PC-9 (cell line): ENCODE measurements at regions of chr2 and their contacts with region 1.

Region 1: GRCh38 chr2:129717560-129718130 is 261.8 kb upstream of the RAB6C start:
- DNase-seq: no peak
- H3K4me3 ChIP-seq: no peak overlapping the region
- H3K27ac ChIP-seq: no peak overlapping the region
- H3K4me1 ChIP-seq: no peaks in the 10 kb centered on the region
- H3K27me3 ChIP-seq: peaks cover 74% of the 10 kb centered on the region
- CTCF ChIP-seq: no peak

Region 2: DNA sequence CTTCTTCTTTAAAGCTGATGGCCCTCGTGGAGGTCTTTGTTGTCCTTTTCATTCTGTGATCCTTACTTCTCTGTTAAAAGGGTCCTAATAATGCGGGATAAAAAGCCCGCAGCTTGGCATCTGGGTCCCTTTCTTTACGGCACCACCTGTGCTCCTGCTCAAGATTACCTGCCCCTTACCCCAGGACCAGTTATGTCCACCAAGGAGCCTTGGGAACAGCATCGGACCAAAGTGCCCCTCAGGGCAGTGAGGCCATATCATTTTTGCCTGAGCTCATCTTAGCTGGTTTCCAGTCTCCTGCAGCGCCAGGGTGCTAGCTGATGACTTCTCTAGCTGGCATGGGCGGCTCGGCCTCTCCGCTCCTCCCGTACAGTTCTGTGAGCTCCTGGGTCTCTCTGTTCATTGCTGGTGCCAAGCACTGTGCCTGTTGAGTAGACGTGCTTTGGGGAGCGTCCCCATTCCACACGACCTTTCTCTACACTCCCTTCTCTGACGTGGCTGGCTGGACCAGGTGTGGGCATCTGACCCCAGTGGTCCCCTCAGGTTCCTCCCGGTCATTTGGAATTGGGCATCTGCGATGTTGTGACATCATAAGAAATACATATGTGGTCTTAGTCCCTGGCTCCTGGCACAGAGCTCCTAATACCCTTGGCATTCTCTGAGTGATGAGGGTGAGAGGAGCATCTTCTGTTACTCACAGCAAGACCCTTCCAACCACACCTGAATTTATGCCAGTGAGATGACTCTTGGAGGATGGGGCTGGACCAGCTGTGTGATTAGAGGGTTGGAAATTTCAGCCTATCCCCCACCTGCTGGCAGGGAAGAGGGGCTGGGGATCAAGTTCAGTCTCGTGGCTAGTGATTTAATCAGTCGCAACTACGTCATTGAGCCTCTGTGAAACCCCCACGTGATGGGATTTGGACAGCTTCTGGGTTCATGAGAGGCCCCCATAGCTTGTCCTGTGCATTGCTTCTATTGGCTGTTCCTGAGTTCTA is 1264.8 kb before region 1 on chr2:
- CTCF ChIA-PET with region 1: no interaction called
- POLR2A ChIA-PET with region 1: no interaction called
- intact Hi-C with region 1: no loop called
- DNase-seq: no peak
- H3K4me3 ChIP-seq: no peak overlapping the region
- H3K27ac ChIP-seq: no peak overlapping the region
- H3K4me1 ChIP-seq: no peaks in the 10 kb centered on the region
- H3K27me3 ChIP-seq: no peaks in the 10 kb centered on the region
- CTCF ChIP-seq: no peak

Region 3: GRCh38 chr2:129689653-129690448 is 27.8 kb before region 1 on chr2:
- CTCF ChIA-PET with region 1: no interaction called
- POLR2A ChIA-PET with region 1: no interaction called
- intact Hi-C with region 1: loop called (anchors 1 kb)
- DNase-seq: no peak
- H3K4me3 ChIP-seq: no peak overlapping the region
- H3K27ac ChIP-seq: no peak overlapping the region
- H3K4me1 ChIP-seq: no peaks in the 10 kb centered on the region
- H3K27me3 ChIP-seq: peaks cover 4% of the 10 kb centered on the region; the same call in 1 of the 2 replicates
- CTCF ChIP-seq: no peak

Region 4: DNA sequence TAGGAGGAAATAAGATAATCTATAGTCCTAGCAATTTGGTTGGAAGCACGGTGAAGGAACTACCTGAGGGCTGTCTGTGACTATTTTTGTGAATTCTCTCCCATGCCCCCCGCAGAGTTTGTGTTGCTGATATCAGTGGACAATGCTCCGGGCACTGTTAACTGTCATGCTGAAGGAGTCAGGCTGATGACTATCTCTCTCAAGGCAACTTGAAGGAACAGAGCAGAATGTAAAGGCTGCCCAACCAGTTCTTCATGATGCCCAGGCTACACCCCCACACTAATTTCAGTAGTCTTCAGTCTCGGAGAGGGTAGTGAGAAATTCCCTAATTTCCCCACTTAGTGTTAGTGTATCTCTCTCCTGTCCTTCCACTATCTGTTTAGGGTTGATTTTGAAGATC is 240.3 kb after region 1 on chr2:
- CTCF ChIA-PET with region 1: no interaction called
- POLR2A ChIA-PET with region 1: no interaction called
- intact Hi-C with region 1: no loop called
- DNase-seq: no peak
- H3K4me3 ChIP-seq: no peak overlapping the region
- H3K27ac ChIP-seq: no peak overlapping the region
- H3K4me1 ChIP-seq: no peaks in the 10 kb centered on the region
- H3K27me3 ChIP-seq: peaks cover 6% of the 10 kb centered on the region; the same call in 1 of the 2 replicates
- CTCF ChIP-seq: no peak